Activated CD8-positive, alpha-beta T cell treated with anti-CD3 and anti-CD28 coated beads for 36 hours (primary cell): ENCODE measurements at regions of chr3 and their contacts with region 1.

Region 1: GRCh38 chr3:124688581-124689454 is 41.4 kb upstream of the UMPS start:
- DNase-seq: peak; percentile 88
- ATAC-seq: peak; percentile 81
- H3K4me3 Mint-ChIP-seq: no peak overlapping the region
- H3K27ac Mint-ChIP-seq: no peak overlapping the region
- H3K4me1 Mint-ChIP-seq: peaks cover 10% of the 10 kb centered on the region
- H3K27me3 Mint-ChIP-seq: peaks cover 24% of the 10 kb centered on the region
- CTCF ChIP-seq: peak; percentile 91

Region 2: DNA sequence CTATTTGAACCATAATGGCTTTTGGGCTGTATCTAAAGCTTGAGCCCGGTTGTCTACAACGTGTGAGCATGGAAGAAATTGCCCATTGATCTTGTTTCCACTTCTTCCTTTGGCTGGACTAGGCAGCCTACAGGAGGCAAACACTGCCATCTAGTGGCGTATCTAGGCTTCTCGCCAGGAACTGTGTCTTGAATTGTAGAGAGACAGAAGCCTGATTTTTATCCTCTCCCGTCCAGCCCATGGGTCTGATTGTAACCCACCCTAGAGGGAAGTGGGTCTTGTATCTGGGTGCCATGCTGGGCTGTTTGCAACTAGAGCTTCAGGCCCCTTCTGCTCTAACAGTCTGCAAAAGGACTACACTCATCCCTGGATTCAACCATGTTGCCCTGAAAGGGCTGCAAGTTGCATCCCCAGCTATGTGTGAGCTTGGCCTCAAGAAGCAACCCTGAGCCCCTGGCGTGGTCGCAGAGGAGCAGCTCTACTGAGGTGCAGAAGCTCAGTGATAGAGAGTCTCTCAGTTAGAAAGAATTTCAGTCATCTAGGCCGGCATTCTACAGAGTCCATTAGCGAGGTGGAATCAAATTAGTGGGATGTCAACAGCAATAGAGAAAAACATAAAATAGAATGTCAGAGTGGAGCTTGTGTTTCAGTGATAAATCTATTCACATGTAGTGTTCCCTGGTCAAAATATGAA is 128.8 kb before region 1 on chr3:
- CTCF ChIA-PET with region 1: interaction called, 231 read pairs
- POLR2A ChIA-PET with region 1: no interaction called
- intact Hi-C with region 1: loop called (anchors 1 kb)
- DNase-seq: peak; percentile 76
- ATAC-seq: peak; percentile 61
- H3K4me3 Mint-ChIP-seq: no peak overlapping the region
- H3K27ac Mint-ChIP-seq: no peak overlapping the region
- H3K4me1 Mint-ChIP-seq: no peaks in the 10 kb centered on the region
- H3K27me3 Mint-ChIP-seq: peaks cover 24% of the 10 kb centered on the region
- CTCF ChIP-seq: peak; percentile 71

Region 3: GRCh38 chr3:124569761-124570160 is 119.1 kb before region 1 on chr3:
- CTCF ChIA-PET with region 1: interaction called, 231 read pairs
- POLR2A ChIA-PET with region 1: no interaction called
- intact Hi-C with region 1: loop called (anchors 1 kb)
- DNase-seq: no peak
- ATAC-seq: no peak
- H3K4me3 Mint-ChIP-seq: no peak overlapping the region
- H3K27ac Mint-ChIP-seq: no peak overlapping the region
- H3K4me1 Mint-ChIP-seq: no peaks in the 10 kb centered on the region
- H3K27me3 Mint-ChIP-seq: peaks cover 6% of the 10 kb centered on the region
- CTCF ChIP-seq: no peak

Region 4: GRCh38 chr3:124620600-124621063 is 68.2 kb before region 1 on chr3:
- CTCF ChIA-PET with region 1: interaction called, 9 read pairs
- POLR2A ChIA-PET with region 1: interaction called, 3 read pairs
- intact Hi-C with region 1: loop called (anchors 2 kb)
- DNase-seq: peak; percentile 56
- ATAC-seq: peak; percentile 92
- H3K4me3 Mint-ChIP-seq: peak overlapping the region; percentile 44
- H3K27ac Mint-ChIP-seq: peak overlapping the region; percentile 77
- H3K4me1 Mint-ChIP-seq: peaks cover 35% of the 10 kb centered on the region
- H3K27me3 Mint-ChIP-seq: peaks cover 4% of the 10 kb centered on the region
- CTCF ChIP-seq: no peak

Region 5: GRCh38 chr3:124639406-124640237 is 49.2 kb before region 1 on chr3:
- CTCF ChIA-PET with region 1: interaction called, 18 read pairs
- POLR2A ChIA-PET with region 1: no interaction called
- intact Hi-C with region 1: no loop called
- DNase-seq: peak; percentile 56
- ATAC-seq: peak; percentile 94
- H3K4me3 Mint-ChIP-seq: peak overlapping the region; percentile 34
- H3K27ac Mint-ChIP-seq: peak overlapping the region; percentile 79
- H3K4me1 Mint-ChIP-seq: peaks cover 36% of the 10 kb centered on the region
- H3K27me3 Mint-ChIP-seq: peaks cover 12% of the 10 kb centered on the region
- CTCF ChIP-seq: no peak

Region 6: GRCh38 chr3:124671106-124671505 is 17.7 kb before region 1 on chr3:
- CTCF ChIA-PET with region 1: interaction called, 11 read pairs
- POLR2A ChIA-PET with region 1: no interaction called
- intact Hi-C with region 1: no loop called
- DNase-seq: peak; percentile 44
- ATAC-seq: peak; percentile 65
- H3K4me3 Mint-ChIP-seq: no peak overlapping the region
- H3K27ac Mint-ChIP-seq: peak overlapping the region; percentile 74
- H3K4me1 Mint-ChIP-seq: peaks cover 11% of the 10 kb centered on the region
- H3K27me3 Mint-ChIP-seq: no peaks in the 10 kb centered on the region
- CTCF ChIP-seq: no peak

Region 7: DNA sequence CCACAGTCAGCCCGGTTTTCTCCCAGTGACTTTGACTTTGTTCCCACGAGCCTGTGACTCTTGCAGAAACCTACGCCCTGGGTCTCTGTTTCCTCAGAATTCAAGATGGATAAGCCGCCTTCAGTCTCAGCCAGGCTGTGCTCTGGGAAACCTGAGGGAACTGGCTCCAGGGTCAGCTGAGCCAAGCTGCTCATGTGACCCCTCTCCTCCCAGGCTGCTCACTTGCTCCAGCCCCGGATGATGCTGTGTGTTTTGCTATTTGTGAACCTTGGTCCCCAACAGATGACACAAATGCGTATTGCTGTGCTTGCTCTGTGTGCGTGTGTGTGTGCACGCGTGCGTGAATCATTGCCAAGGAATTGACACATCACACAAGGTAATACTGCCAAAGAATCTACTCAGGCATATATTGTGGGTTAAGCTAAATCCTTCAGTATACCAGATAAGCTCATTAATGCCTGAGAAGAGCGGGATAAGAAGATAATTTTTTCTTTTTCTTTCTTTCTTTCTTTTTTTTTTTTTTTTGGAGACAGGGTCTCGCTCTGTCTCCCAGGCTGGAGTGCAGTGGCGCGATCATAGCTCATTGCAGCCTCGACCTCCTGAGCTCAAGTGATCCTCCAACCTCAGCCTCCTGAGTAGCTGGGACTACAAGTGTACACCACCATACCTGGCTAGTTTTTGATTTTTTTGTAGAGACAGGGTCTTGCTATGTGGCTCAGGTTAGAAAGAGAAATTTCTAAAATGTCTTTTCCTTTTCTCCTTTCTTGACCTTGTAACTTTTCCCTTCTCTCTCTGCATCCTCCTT is 12.3 kb after region 1 on chr3:
- CTCF ChIA-PET with region 1: interaction called, 16 read pairs
- POLR2A ChIA-PET with region 1: no interaction called
- intact Hi-C with region 1: no loop called
- DNase-seq: no peak
- ATAC-seq: no peak
- H3K4me3 Mint-ChIP-seq: no peak overlapping the region
- H3K27ac Mint-ChIP-seq: no peak overlapping the region
- H3K4me1 Mint-ChIP-seq: no peaks in the 10 kb centered on the region
- H3K27me3 Mint-ChIP-seq: peaks cover 25% of the 10 kb centered on the region
- CTCF ChIP-seq: no peak

Region 8: GRCh38 chr3:124867511-124867910 is 178.7 kb after region 1 on chr3:
- CTCF ChIA-PET with region 1: no interaction called
- POLR2A ChIA-PET with region 1: no interaction called
- intact Hi-C with region 1: no loop called
- DNase-seq: no peak
- ATAC-seq: no peak
- H3K4me3 Mint-ChIP-seq: no peak overlapping the region
- H3K27ac Mint-ChIP-seq: no peak overlapping the region
- H3K4me1 Mint-ChIP-seq: no peaks in the 10 kb centered on the region
- H3K27me3 Mint-ChIP-seq: peaks cover 4% of the 10 kb centered on the region
- CTCF ChIP-seq: no peak